CD8-positive, alpha-beta T cell (primary cell): ENCODE measurements at regions of chr19 and their contacts with region 1.

Region 1: GRCh38 chr19:2636897-2637683 is 65.4 kb downstream of the GNG7 start:
- DNase-seq: peak; percentile 59 to 85 (median 75)
- ATAC-seq: peak; percentile 99
- H3K4me3 ChIP-seq: no peak overlapping the region
- H3K4me3 Mint-ChIP-seq: no peak overlapping the region
- H3K27ac ChIP-seq: no peak overlapping the region
- H3K27ac Mint-ChIP-seq: no peak overlapping the region
- H3K4me1 ChIP-seq: peaks cover 12% of the 10 kb centered on the region
- H3K4me1 Mint-ChIP-seq: peaks cover 9% of the 10 kb centered on the region
- H3K27me3 ChIP-seq: no peaks in the 10 kb centered on the region
- H3K27me3 Mint-ChIP-seq: no peaks in the 10 kb centered on the region
- CTCF ChIP-seq: peak; percentile 70

Region 2: GRCh38 chr19:2423071-2423914 is 213.8 kb before region 1 on chr19:
- CTCF ChIA-PET with region 1: no interaction called
- POLR2A ChIA-PET with region 1: no interaction called
- intact Hi-C with region 1: no loop called
- DNase-seq: no peak
- ATAC-seq: no peak
- H3K4me3 ChIP-seq: no peak overlapping the region
- H3K4me3 Mint-ChIP-seq: no peak overlapping the region
- H3K27ac ChIP-seq: no peak overlapping the region
- H3K27ac Mint-ChIP-seq: no peak overlapping the region
- H3K4me1 ChIP-seq: peaks cover 17% of the 10 kb centered on the region
- H3K4me1 Mint-ChIP-seq: peaks cover 13% of the 10 kb centered on the region
- H3K27me3 ChIP-seq: no peaks in the 10 kb centered on the region
- H3K27me3 Mint-ChIP-seq: no peaks in the 10 kb centered on the region
- CTCF ChIP-seq: no peak

Region 3: DNA sequence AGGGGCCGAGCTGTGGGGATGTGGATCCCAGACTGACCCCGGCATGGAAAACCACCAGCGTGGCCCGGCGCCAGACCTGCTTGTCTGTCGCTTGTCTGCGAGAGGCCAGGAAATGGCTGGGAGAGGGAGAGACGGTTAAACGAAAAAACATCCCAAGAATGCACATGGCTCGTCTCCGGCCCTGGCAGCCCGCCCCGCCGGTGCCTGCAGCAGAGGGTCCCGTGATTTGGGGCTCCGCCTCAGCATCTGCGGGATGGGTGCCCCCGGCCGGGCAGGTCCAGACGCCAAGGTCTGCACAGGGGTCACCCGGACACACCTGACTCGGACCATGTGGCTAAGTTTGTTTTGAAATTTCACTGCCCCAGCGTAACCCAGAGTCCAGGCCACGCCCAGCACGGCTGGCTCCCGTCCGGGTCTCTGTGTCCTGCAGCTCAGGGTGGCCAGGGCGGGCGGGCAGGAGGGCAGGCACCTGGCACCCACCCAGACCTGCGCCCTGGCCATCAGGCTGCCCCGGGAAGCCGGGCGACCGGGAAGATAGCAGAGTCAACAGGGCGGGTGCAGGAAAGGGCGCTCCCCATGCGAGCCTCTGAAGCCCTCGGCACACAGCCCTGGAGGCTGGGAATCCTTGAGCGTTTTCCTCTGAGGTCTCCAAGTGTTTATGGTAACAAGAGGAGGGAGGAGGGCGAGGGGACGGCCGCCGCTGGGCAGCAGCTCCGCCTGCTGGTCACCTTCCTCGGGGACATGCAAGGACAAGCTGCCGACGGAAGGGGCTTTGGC is 58.0 kb before region 1 on chr19:
- CTCF ChIA-PET with region 1: interaction called, 11 read pairs
- POLR2A ChIA-PET with region 1: no interaction called
- intact Hi-C with region 1: loop called in 1 of 2 experiments (anchors 2 kb)
- DNase-seq: peak; percentile 44 to 81 (median 69)
- ATAC-seq: peak; percentile 54
- H3K4me3 ChIP-seq: peak overlapping the region; percentile 4 to 49
- H3K4me3 Mint-ChIP-seq: peak overlapping the region; percentile 45
- H3K27ac ChIP-seq: no peak overlapping the region
- H3K27ac Mint-ChIP-seq: no peak overlapping the region
- H3K4me1 ChIP-seq: peaks cover 11% of the 10 kb centered on the region
- H3K4me1 Mint-ChIP-seq: peaks cover 2% of the 10 kb centered on the region
- H3K27me3 ChIP-seq: peaks cover 0 to 5% of the 10 kb centered on the region in 2 experiments
- H3K27me3 Mint-ChIP-seq: no peaks in the 10 kb centered on the region
- CTCF ChIP-seq: peak; percentile 44

Region 4: GRCh38 chr19:2602391-2603181 is 34.5 kb before region 1 on chr19:
- CTCF ChIA-PET with region 1: interaction called, 12 read pairs
- POLR2A ChIA-PET with region 1: no interaction called
- intact Hi-C with region 1: no loop called
- DNase-seq: no peak
- ATAC-seq: no peak
- H3K4me3 ChIP-seq: no peak overlapping the region
- H3K4me3 Mint-ChIP-seq: no peak overlapping the region
- H3K27ac ChIP-seq: no peak overlapping the region
- H3K27ac Mint-ChIP-seq: no peak overlapping the region
- H3K4me1 ChIP-seq: peaks cover 13% of the 10 kb centered on the region
- H3K4me1 Mint-ChIP-seq: peaks cover 13% of the 10 kb centered on the region
- H3K27me3 ChIP-seq: no peaks in the 10 kb centered on the region
- H3K27me3 Mint-ChIP-seq: no peaks in the 10 kb centered on the region
- CTCF ChIP-seq: no peak

Region 5: DNA sequence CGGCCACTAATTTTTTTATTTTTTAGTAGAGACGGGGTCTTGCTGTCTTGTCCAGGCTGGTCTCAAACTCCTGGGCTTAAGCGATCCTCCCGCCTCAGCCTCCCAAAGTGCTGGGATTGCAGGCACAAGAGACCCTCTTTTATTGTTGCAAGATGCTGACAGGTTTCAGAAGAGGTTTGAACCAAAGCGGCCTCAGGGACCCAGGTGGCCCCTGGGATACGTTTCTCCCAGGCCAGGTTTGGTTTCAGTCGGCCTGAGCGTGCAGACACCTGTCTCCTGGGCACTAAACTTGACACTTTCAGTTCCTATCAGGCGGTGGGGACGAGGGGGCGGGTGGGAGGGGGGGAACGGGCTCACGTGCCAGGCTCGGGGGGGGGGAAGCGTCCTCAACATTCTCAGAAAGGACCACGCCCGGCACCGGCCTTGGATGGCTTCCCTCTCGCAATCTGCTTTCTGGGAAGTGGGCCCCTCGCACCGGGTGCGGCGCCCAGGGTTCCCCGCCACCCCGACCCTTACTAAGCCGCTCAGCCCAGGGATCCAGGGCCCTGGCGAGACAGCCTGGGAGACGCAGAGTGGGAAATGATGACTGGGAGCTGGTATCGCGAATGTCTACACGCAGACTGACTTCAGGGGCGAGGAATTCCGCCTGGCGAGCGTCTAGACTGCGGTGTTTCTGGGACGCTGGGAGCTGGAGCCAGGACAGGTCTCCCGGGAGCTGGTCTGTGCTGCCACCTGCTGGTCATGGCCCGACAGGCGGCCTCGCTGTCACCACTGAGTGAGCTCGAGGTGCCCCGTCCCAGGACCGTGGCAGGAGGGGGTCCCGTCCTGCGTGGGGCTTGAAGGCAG is 26.2 kb before region 1 on chr19:
- CTCF ChIA-PET with region 1: interaction called, 108 read pairs
- POLR2A ChIA-PET with region 1: interaction called, 3 read pairs
- intact Hi-C with region 1: loop called (anchors 1 kb)
- DNase-seq: peak; percentile 73 to 96 (median 89)
- ATAC-seq: peak; percentile 37
- H3K4me3 ChIP-seq: peak overlapping the region; percentile 37 to 42
- H3K4me3 Mint-ChIP-seq: peak overlapping the region; percentile 81
- H3K27ac ChIP-seq: no peak overlapping the region
- H3K27ac Mint-ChIP-seq: peak overlapping the region; percentile 57
- H3K4me1 ChIP-seq: peaks cover 30% of the 10 kb centered on the region
- H3K4me1 Mint-ChIP-seq: peaks cover 39% of the 10 kb centered on the region
- H3K27me3 ChIP-seq: peaks cover 0 to 2% of the 10 kb centered on the region in 2 experiments
- H3K27me3 Mint-ChIP-seq: no peaks in the 10 kb centered on the region
- CTCF ChIP-seq: peak; percentile 99

Region 6: GRCh38 chr19:2618611-2619010 is 18.5 kb before region 1 on chr19:
- CTCF ChIA-PET with region 1: interaction called, 108 read pairs
- POLR2A ChIA-PET with region 1: interaction called, 24 read pairs
- intact Hi-C with region 1: loop called in 1 of 2 experiments (anchors 2 kb)
- DNase-seq: peak in 8 of 9 experiments; percentile 55 to 86 (median 76)
- ATAC-seq: no peak
- H3K4me3 ChIP-seq: peak overlapping the region in 1 of 2 experiments; percentile 26
- H3K4me3 Mint-ChIP-seq: peak overlapping the region; percentile 75
- H3K27ac ChIP-seq: peak overlapping the region; percentile 37 to 51
- H3K27ac Mint-ChIP-seq: peak overlapping the region; percentile 92
- H3K4me1 ChIP-seq: peaks cover 66% of the 10 kb centered on the region
- H3K4me1 Mint-ChIP-seq: peaks cover 66% of the 10 kb centered on the region
- H3K27me3 ChIP-seq: no peaks in the 10 kb centered on the region
- H3K27me3 Mint-ChIP-seq: no peaks in the 10 kb centered on the region
- CTCF ChIP-seq: no peak

Region 7: GRCh38 chr19:2648528-2648937 is 11.4 kb after region 1 on chr19:
- CTCF ChIA-PET with region 1: interaction called, 23 read pairs
- POLR2A ChIA-PET with region 1: interaction called, 4 read pairs
- intact Hi-C with region 1: no loop called
- DNase-seq: peak; percentile 53 to 84 (median 76)
- ATAC-seq: peak; percentile 99
- H3K4me3 ChIP-seq: no peak overlapping the region
- H3K4me3 Mint-ChIP-seq: no peak overlapping the region
- H3K27ac ChIP-seq: no peak overlapping the region
- H3K27ac Mint-ChIP-seq: no peak overlapping the region
- H3K4me1 ChIP-seq: no peaks in the 10 kb centered on the region
- H3K4me1 Mint-ChIP-seq: peaks cover 2% of the 10 kb centered on the region
- H3K27me3 ChIP-seq: no peaks in the 10 kb centered on the region
- H3K27me3 Mint-ChIP-seq: no peaks in the 10 kb centered on the region
- CTCF ChIP-seq: peak; percentile 97